Breast epithelium (tissue), 4 donors: ENCODE measurements at regions of chr6 and their contacts with region 1.

Region 1: GRCh38 chr6:17621003-17621402 is 20.9 kb downstream of the FAM8A1 start:
- DNase-seq: no peak
- H3K4me3 ChIP-seq: no peak overlapping the region
- H3K27ac ChIP-seq: no peak overlapping the region
- H3K4me1 ChIP-seq: no peaks in the 10 kb centered on the region
- H3K27me3 ChIP-seq: no peaks in the 10 kb centered on the region
- CTCF ChIP-seq: no peak
- POLR2A ChIP-seq: no peak

Region 2: GRCh38 chr6:17584241-17584803 is 36.7 kb before region 1 on chr6:
- intact Hi-C with region 1: loop called (anchors 2 kb)
- DNase-seq: no peak
- H3K4me3 ChIP-seq: peak overlapping the region in 2 of 3 donors; percentile 16 to 27
- H3K27ac ChIP-seq: peak overlapping the region; percentile 60 to 62
- H3K4me1 ChIP-seq: no peaks in the 10 kb centered on the region
- H3K27me3 ChIP-seq: no peaks in the 10 kb centered on the region
- CTCF ChIP-seq: peak; percentile 68 to 94 (median 88)
- POLR2A ChIP-seq: no peak